Activated CD4-positive, alpha-beta T cell treated with anti-CD3 and anti-CD28 coated beads for 36 hours (primary cell): ENCODE measurements at regions of chr20 and their contacts with region 1.

Region 1: DNA sequence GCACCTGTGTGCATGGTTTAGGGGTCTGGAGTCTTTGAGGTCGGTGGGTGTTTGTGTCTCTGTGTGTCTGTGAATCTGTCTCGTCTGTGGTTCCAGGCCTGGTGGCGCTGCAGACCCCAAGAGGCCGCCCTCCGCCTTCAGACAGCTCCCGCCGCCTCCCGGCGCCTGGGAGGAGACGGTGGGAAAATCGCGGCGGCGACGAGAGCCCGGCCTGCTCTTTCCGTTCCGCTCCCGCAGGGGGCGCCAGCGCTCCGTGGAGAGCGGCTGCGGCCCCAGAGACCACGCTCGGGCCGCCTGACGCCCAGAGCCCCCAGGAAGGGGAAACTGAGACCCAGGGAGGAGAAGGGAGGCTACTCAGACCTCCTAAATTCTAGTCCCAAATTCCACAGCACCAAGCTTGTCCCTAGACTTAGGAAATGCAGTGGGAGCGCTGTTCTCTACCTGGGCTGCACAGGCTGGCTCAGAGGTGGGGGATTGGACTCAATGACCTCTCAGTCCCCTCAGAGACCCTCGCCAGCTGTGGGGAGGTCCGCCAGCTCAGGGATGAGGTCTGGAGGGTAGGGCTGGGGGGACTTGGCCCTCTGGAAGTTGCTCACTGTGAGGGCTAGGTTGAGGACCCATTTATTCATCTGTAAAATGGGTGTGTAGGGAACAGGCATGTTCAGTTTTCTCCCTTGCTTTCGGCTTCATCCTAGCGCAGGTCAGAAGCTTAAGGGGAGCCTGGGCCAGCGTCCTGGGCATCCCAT is 36.9 kb upstream of the BLCAP start:
- DNase-seq: peak; percentile 68
- ATAC-seq: peak; percentile 57
- H3K4me3 Mint-ChIP-seq: no peak overlapping the region
- H3K27ac Mint-ChIP-seq: no peak overlapping the region
- H3K4me1 Mint-ChIP-seq: no peaks in the 10 kb centered on the region
- H3K27me3 Mint-ChIP-seq: peaks cover 34% of the 10 kb centered on the region

Region 2: DNA sequence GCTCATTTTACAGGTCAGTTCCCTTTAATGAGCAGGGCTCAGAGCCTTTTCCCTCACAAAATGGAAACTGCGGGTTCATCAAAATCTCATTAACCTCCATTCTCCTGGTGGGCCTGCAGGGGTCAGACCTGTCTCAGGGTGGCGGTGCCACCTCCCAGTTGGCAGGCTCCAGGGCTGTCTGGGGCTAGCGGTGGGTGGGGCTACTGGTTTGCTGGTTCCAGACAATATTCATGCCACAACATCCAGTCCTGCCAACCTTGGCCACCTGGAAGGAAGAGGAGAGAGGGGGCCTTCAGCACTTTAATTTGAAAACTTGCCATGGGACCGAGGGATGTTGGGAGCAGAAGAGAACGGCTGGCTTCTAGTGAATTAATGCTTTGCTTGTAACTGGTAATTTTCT is 87.4 kb after region 1 on chr20:
- CTCF ChIA-PET with region 1: no interaction called
- POLR2A ChIA-PET with region 1: no interaction called
- intact Hi-C with region 1: loop called in 1 of 2 experiments (anchors 5 kb)
- DNase-seq: peak; percentile 70
- ATAC-seq: peak; percentile 94
- H3K4me3 Mint-ChIP-seq: no peak overlapping the region
- H3K27ac Mint-ChIP-seq: no peak overlapping the region
- H3K4me1 Mint-ChIP-seq: no peaks in the 10 kb centered on the region
- H3K27me3 Mint-ChIP-seq: peaks cover 9% of the 10 kb centered on the region

Region 3: DNA sequence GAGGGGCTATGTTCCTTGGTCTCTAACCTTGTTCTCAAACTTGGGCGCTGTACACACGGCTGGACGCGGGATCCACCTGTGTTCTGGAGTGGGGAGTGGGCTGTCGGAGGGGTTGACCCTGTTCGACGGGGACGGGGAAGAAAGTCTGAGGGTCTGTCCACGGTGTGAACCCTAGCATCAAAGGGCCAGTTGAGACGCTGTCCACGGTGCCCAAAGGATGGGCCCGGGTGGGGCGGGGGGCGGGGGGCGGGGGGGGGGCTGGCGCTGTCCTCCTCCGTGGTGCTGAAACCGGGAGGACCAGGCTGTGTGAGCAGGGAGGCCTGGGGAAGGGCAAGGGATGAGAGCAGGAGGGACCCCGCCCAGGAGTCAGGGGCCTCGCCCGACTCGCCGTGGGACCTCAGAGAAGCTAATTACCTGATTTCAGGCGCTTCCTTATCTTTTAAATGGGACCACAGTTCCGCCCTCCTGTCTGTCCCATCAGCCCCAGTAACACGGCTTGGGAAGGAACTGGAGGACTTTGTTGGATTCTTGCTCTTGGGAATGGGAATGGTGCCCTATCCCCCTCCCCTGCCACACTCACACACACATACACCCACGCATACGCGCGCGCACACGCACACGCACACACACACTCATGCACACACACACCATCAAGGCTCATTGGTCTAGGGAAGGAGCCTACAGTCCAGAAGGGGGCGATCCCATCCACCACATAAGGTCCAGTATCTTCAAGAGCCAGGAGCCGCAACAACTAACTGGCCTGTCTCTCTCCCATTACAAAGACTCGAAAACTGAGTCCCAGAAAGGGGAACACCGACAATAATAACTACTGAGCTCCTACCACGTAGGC is 337.3 kb after region 1 on chr20:
- CTCF ChIA-PET with region 1: no interaction called
- POLR2A ChIA-PET with region 1: no interaction called
- intact Hi-C with region 1: loop called (anchors 5 to 10 kb)
- DNase-seq: peak; percentile 56
- ATAC-seq: no peak
- H3K4me3 Mint-ChIP-seq: peak overlapping the region; percentile 29
- H3K27ac Mint-ChIP-seq: no peak overlapping the region
- H3K4me1 Mint-ChIP-seq: peaks cover 14% of the 10 kb centered on the region
- H3K27me3 Mint-ChIP-seq: peaks cover 49% of the 10 kb centered on the region

Region 4: GRCh38 chr20:38057351-38057972 is 492.9 kb after region 1 on chr20:
- CTCF ChIA-PET with region 1: no interaction called
- POLR2A ChIA-PET with region 1: no interaction called
- intact Hi-C with region 1: loop called in 1 of 2 experiments (anchors 10 kb)
- DNase-seq: peak; percentile 87
- ATAC-seq: peak; percentile 92
- H3K4me3 Mint-ChIP-seq: peak overlapping the region; percentile 29
- H3K27ac Mint-ChIP-seq: peak overlapping the region; percentile 86
- H3K4me1 Mint-ChIP-seq: peaks cover 34% of the 10 kb centered on the region
- H3K27me3 Mint-ChIP-seq: no peaks in the 10 kb centered on the region

Region 5: DNA sequence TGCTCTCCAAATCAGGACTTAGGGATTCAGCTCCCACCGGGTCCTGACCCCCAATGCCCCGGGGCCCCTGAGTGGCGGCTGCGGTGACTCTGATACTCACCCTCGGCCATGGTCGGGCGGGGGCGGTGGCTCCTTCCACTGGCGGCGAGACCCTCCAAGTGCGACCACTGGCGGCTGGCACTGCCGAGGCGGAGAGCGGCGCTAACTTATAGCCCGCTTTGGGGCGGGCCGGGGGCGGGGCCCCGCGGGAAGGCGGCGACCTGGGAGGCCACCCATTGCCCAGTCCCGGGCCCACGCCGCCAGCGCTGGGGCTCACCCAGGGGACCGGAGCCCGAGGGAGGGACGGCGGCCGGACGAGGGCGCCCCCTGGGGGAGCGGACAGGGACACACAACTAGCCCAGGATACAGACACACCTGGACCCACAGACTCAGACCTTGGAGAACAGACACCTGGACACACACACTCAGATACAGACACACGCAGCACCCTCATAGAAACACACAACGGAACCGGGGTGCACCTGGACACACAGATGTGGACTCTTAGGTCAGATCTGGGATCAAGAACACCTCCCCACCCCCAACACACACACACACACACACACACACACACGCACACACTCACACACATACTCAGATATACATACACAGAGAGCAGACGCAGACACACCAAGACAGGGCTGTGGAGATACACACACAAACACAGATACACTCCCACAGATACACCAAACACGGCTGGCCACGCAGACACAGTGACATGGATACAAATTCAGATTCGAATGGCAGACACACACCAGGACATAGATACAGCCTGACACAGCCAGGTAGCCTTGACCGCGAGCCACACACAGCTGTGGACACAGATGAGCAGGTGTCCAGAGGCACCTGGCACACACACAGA is 600.8 kb after region 1 on chr20 and contains the start of gene TGM2:
- CTCF ChIA-PET with region 1: no interaction called
- POLR2A ChIA-PET with region 1: no interaction called
- intact Hi-C with region 1: loop called in 1 of 2 experiments (anchors 2 kb)
- DNase-seq: peak; percentile 68
- ATAC-seq: peak; percentile 77
- H3K4me3 Mint-ChIP-seq: no peak within 1 kb of the TSS
- H3K27ac Mint-ChIP-seq: no peak within 1 kb of the TSS
- H3K4me1 Mint-ChIP-seq: peaks cover 8% of the 10 kb centered on the region
- H3K27me3 Mint-ChIP-seq: peaks cover 20% of the 10 kb centered on the region
- total RNA-seq, gene TGM2: 0.04 to 0.09 TPM

Region 6: GRCh38 chr20:38355151-38356012 is 790.8 kb after region 1 on chr20:
- CTCF ChIA-PET with region 1: no interaction called
- POLR2A ChIA-PET with region 1: no interaction called
- intact Hi-C with region 1: loop called in 1 of 2 experiments (anchors 1 kb)
- DNase-seq: no peak
- ATAC-seq: no peak
- H3K4me3 Mint-ChIP-seq: no peak overlapping the region
- H3K27ac Mint-ChIP-seq: no peak overlapping the region
- H3K4me1 Mint-ChIP-seq: peaks cover 3% of the 10 kb centered on the region
- H3K27me3 Mint-ChIP-seq: no peaks in the 10 kb centered on the region